GM12878 (cell line): ENCODE measurements at regions of chr5 and their contacts with region 1.

Region 1: GRCh38 chr5:64612344-64612961 is 77.8 kb upstream of the SHISAL2B start:
- DNase-seq: no peak
- ATAC-seq: peak; percentile 72
- H3K4me3 ChIP-seq: no peak overlapping the region
- H3K27ac ChIP-seq: no peak overlapping the region
- H3K4me1 ChIP-seq: no peaks in the 10 kb centered on the region
- H3K27me3 ChIP-seq: no peaks in the 10 kb centered on the region
- CTCF ChIP-seq: peak; percentile 65 to 80 (median 67)
- EP300 ChIP-seq: no peak
- POLR2A ChIP-seq: no peak
- RAD21 ChIP-seq: peak; percentile 90

Region 2: DNA sequence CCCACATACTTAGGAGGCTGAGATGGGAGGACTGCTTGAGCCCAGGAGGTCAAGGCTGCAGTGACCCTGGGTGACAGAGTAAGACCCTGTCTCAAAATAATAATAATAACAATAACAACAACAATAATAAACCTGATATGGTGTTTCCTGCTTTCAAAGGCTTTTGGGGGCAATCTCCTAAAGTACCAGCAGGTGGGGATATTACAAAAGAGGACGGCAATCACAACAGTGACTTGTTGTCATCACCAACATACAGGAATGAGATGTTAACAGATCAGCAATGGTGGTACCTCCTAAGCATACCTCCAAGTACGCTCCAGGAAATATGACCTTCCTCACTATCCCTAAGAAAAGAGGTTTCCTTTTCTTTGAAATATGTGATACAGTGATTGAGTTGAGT is 537.9 kb before region 1 on chr5:
- CTCF ChIA-PET with region 1: interaction called, 4 read pairs
- POLR2A ChIA-PET with region 1: no interaction called
- RAD21 ChIA-PET with region 1: interaction called, 3 read pairs
- SMC1A ChIA-PET with region 1: interaction called, 4 read pairs
- in situ Hi-C with region 1: no loop called
- intact Hi-C with region 1: loop called (anchors 1 kb)
- DNase-seq: no peak
- ATAC-seq: peak; percentile 80
- H3K4me3 ChIP-seq: no peak overlapping the region
- H3K27ac ChIP-seq: no peak overlapping the region
- H3K4me1 ChIP-seq: no peaks in the 10 kb centered on the region
- H3K27me3 ChIP-seq: no peaks in the 10 kb centered on the region
- CTCF ChIP-seq: peak; percentile 46 to 60 (median 59); a peak in 5 of 6 replicates
- EP300 ChIP-seq: no peak
- POLR2A ChIP-seq: no peak
- RAD21 ChIP-seq: peak; percentile 53

Region 3: DNA sequence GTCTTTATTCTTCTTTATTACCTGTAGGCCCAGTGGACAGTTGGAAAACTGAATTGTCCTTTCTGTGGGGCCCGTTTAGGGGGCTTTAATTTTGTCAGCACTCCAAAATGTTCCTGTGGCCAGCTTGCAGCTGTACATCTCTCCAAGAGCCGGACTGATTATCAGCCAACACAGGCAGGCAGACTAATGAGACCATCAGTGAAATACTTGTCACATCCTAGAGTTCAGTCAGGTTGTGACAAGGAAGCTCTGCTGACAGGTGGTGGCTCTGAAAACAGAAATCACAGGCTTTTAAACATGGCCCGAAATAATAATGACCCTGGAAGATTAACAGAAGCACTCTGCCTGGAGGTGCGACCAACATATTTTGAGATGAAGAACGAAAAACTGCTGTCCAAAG is 398.9 kb before region 1 on chr5:
- CTCF ChIA-PET with region 1: interaction called, 31 read pairs
- POLR2A ChIA-PET with region 1: no interaction called
- RAD21 ChIA-PET with region 1: interaction called, 6 read pairs
- SMC1A ChIA-PET with region 1: interaction called, 5 read pairs
- in situ Hi-C with region 1: no loop called
- intact Hi-C with region 1: no loop called
- DNase-seq: no peak
- ATAC-seq: peak; percentile 45
- H3K4me3 ChIP-seq: no peak overlapping the region
- H3K27ac ChIP-seq: no peak overlapping the region
- H3K4me1 ChIP-seq: no peaks in the 10 kb centered on the region
- H3K27me3 ChIP-seq: no peaks in the 10 kb centered on the region
- CTCF ChIP-seq: no peak
- EP300 ChIP-seq: no peak
- POLR2A ChIP-seq: no peak
- RAD21 ChIP-seq: no peak

Region 4: GRCh38 chr5:64384761-64385160 is 227.7 kb before region 1 on chr5:
- CTCF ChIA-PET with region 1: no interaction called
- POLR2A ChIA-PET with region 1: no interaction called
- RAD21 ChIA-PET with region 1: no interaction called
- SMC1A ChIA-PET with region 1: interaction called, 6 read pairs
- in situ Hi-C with region 1: no loop called
- intact Hi-C with region 1: loop called (anchors 1 kb)
- DNase-seq: no peak
- ATAC-seq: peak; percentile 98
- H3K4me3 ChIP-seq: no peak overlapping the region
- H3K27ac ChIP-seq: no peak overlapping the region
- H3K4me1 ChIP-seq: no peaks in the 10 kb centered on the region
- H3K27me3 ChIP-seq: no peaks in the 10 kb centered on the region
- CTCF ChIP-seq: peak; percentile 9 to 26 (median 24); a peak in 3 of 6 replicates
- EP300 ChIP-seq: no peak
- POLR2A ChIP-seq: no peak
- RAD21 ChIP-seq: no peak; the same call in 1 of the 2 replicates

Region 5: GRCh38 chr5:64625678-64626077 is 13.2 kb after region 1 on chr5:
- CTCF ChIA-PET with region 1: interaction called, 30 read pairs
- POLR2A ChIA-PET with region 1: no interaction called
- RAD21 ChIA-PET with region 1: interaction called, 4 read pairs
- SMC1A ChIA-PET with region 1: interaction called, 20 read pairs
- in situ Hi-C with region 1: no loop called
- intact Hi-C with region 1: no loop called
- DNase-seq: no peak
- ATAC-seq: no peak
- H3K4me3 ChIP-seq: no peak overlapping the region
- H3K27ac ChIP-seq: no peak overlapping the region
- H3K4me1 ChIP-seq: no peaks in the 10 kb centered on the region
- H3K27me3 ChIP-seq: no peaks in the 10 kb centered on the region
- CTCF ChIP-seq: no peak
- EP300 ChIP-seq: no peak
- POLR2A ChIP-seq: no peak
- RAD21 ChIP-seq: no peak

Region 6: DNA sequence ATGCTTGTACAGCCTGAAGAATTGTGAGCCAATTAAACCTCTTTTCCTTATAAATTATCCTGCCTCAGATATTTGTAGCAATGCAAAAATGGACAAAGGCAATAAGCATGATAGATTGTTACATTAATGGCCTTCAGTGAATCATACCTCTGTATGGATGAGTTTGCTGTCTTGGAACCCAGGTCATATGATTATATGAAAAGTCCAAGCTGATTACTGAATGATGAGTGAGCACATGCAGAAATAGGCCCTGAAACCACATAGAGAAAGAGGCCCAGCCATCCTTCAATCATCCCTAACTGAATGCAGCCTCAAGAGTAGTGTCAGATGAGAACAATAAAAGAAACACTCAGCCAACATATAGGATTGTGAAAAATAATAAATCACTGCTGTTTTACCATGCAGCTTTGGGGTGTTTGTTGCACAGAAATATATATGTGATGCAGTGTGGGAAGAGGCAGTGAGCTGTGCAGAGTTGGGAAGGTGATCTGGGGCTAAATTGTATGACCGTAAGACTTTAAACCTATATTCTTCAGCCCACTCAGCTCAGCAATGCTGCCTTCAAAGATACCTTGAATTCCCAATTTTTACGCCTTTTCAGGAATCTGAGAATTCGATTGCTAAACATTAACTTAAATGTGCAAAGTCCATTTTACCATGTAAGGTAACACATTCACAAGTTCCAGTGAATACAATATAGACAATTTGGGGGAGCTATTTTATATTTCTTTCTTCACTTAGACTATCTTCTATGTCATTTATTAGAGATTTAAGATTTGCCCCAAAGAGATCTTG is 41.5 kb after region 1 on chr5:
- CTCF ChIA-PET with region 1: no interaction called
- POLR2A ChIA-PET with region 1: no interaction called
- RAD21 ChIA-PET with region 1: no interaction called
- SMC1A ChIA-PET with region 1: no interaction called
- in situ Hi-C with region 1: no loop called
- intact Hi-C with region 1: no loop called
- DNase-seq: no peak
- ATAC-seq: no peak
- H3K4me3 ChIP-seq: no peak overlapping the region
- H3K27ac ChIP-seq: no peak overlapping the region
- H3K4me1 ChIP-seq: no peaks in the 10 kb centered on the region
- H3K27me3 ChIP-seq: no peaks in the 10 kb centered on the region
- CTCF ChIP-seq: no peak
- EP300 ChIP-seq: no peak
- POLR2A ChIP-seq: no peak
- RAD21 ChIP-seq: no peak

Region 7: DNA sequence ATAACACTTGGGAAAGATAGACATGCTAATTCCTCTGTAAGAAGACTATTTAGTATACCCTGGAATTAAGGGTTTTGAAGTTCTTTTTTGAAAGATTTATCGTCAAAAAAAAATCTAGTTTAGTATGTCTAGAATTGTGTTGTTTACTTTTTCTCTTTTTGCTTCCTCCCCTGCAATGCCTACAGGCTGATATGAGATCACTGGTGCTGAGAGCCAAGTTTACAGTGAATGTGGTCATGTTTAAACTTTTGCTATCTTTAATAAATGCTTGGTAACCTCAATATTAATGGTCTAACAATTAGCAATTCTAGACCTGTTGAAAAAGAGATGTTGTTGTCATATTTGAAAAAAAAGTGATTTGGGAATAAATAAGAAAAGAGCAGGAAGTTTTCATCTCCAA is 242.4 kb after region 1 on chr5:
- CTCF ChIA-PET with region 1: no interaction called
- POLR2A ChIA-PET with region 1: no interaction called
- RAD21 ChIA-PET with region 1: no interaction called
- SMC1A ChIA-PET with region 1: no interaction called
- in situ Hi-C with region 1: no loop called
- intact Hi-C with region 1: no loop called
- DNase-seq: no peak
- ATAC-seq: no peak
- H3K4me3 ChIP-seq: no peak overlapping the region
- H3K27ac ChIP-seq: no peak overlapping the region
- H3K4me1 ChIP-seq: no peaks in the 10 kb centered on the region
- H3K27me3 ChIP-seq: no peaks in the 10 kb centered on the region
- CTCF ChIP-seq: no peak
- EP300 ChIP-seq: no peak
- POLR2A ChIP-seq: no peak
- RAD21 ChIP-seq: no peak